ENCODE measurements at regions of chrX and their contacts with region 1.

Region 1: DNA sequence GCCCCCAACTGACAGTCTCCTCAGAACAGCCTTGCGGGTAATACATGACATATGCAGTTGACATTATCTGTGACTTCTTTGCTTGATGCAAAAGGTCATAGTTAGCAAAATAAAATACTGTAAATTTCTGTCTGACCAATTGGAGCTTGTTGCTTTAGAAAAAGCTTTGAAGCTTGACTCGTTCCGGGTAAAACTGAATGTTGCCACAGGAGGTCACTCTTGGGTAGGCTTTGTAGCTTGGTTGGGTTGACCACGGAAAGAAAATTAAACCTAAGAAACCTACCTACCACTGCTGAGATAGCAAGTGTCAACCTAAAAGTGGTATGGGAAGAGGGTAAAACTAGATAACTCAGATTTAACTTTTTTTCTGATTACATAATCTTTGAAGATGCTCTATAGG is 23.2 kb downstream of the PRPS2 start:
- DNase-seq: peak; percentile 44 to 51
- H3K4me3 ChIP-seq: no peak overlapping the region
- H3K27ac ChIP-seq: no peak overlapping the region
- H3K4me1 ChIP-seq: no peaks in the 10 kb centered on the region
- H3K27me3 ChIP-seq: no peaks in the 10 kb centered on the region
- CTCF ChIP-seq: peak; percentile 75

Region 2: DNA sequence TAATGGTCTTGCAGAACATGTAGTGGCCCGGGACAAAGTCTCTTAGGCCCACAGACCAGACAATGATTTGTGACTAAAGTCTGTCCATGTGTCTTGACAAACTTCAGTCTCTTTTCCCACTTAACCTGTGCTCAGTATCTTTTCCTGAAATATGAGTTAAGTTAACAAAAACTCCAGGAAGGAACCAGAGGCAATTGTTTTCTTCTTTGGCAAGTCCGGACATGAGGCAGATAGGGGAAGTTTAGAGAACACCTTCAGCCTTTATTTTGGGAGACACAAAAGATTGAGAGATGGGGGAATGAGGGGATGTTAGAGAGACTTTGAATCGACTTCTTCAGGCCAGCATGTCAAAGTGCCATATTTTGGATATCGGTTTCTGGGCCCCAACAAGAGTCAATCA is 756.3 kb before region 1 on chrX:
- CTCF ChIA-PET with region 1: no interaction called
- POLR2A ChIA-PET with region 1: no interaction called
- intact Hi-C with region 1: no loop called
- DNase-seq: no peak
- H3K4me3 ChIP-seq: no peak overlapping the region
- H3K27ac ChIP-seq: no peak overlapping the region
- H3K4me1 ChIP-seq: no peaks in the 10 kb centered on the region
- H3K27me3 ChIP-seq: no peaks in the 10 kb centered on the region
- CTCF ChIP-seq: no peak

Region 3: DNA sequence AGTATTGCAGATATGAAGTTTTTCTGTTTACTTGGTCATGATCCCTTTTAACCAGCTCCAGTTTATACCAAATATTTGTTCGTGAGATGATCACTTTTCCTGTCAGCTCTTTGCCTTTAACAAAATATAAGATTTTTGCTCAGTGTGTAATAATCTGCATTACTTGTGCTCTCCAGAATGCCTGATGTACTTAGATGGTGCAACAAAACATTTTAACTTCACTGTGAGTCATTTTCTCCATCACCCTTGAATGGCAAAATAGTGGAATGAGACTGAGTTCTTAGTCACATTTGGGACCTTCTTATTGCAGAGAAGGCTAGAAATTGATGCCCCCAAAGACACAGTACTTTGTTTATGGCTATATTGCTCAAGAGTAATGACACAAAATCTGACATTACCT is 424.1 kb before region 1 on chrX:
- CTCF ChIA-PET with region 1: no interaction called
- POLR2A ChIA-PET with region 1: no interaction called
- intact Hi-C with region 1: no loop called
- DNase-seq: no peak
- H3K4me3 ChIP-seq: no peak overlapping the region
- H3K27ac ChIP-seq: no peak overlapping the region
- H3K4me1 ChIP-seq: no peaks in the 10 kb centered on the region
- H3K27me3 ChIP-seq: 0 out of 2 replicates have a peak, but pooled peaks cover 3% of the 10 kb centered on the region
- CTCF ChIP-seq: no peak

Region 4: GRCh38 chrX:12721042-12721441 is 93.4 kb before region 1 on chrX:
- CTCF ChIA-PET with region 1: no interaction called
- POLR2A ChIA-PET with region 1: no interaction called
- intact Hi-C with region 1: no loop called
- DNase-seq: peak in 1 of 2 experiments; percentile 7
- H3K4me3 ChIP-seq: no peak overlapping the region
- H3K27ac ChIP-seq: no peak overlapping the region
- H3K4me1 ChIP-seq: no peaks in the 10 kb centered on the region
- H3K27me3 ChIP-seq: peaks cover 34% of the 10 kb centered on the region
- CTCF ChIP-seq: no peak

Region 5: GRCh38 chrX:12901486-12901885 is 87.1 kb after region 1 on chrX:
- CTCF ChIA-PET with region 1: no interaction called
- POLR2A ChIA-PET with region 1: no interaction called
- intact Hi-C with region 1: loop called (anchors 1 kb)
- DNase-seq: peak; percentile 52 to 57
- H3K4me3 ChIP-seq: no peak overlapping the region
- H3K27ac ChIP-seq: no peak overlapping the region
- H3K4me1 ChIP-seq: no peaks in the 10 kb centered on the region
- H3K27me3 ChIP-seq: no peaks in the 10 kb centered on the region
- CTCF ChIP-seq: peak; percentile 73

Region 6: DNA sequence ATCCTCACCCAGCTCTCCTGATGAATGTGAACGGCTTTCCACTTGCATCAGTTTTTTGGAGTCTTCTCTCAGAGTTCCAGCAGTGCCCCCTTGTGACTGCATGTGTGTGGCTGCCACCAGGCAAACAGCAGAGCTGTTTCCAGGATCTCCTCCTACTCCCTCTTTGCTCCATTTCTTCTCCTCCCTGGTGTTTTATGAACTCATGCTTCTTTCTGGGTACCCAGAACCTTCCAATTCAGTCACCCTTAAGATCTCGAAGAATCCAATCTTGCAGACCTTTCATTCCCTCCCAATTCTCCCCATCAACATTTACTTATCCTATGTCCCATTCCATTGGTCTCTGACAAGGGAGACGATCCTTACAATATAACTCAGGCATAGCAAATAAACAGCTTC is 831.7 kb after region 1 on chrX:
- CTCF ChIA-PET with region 1: no interaction called
- POLR2A ChIA-PET with region 1: no interaction called
- intact Hi-C with region 1: loop called (anchors 2 kb)
- DNase-seq: peak in 1 of 2 experiments; percentile 23
- H3K4me3 ChIP-seq: no peak overlapping the region
- H3K27ac ChIP-seq: no peak overlapping the region
- H3K4me1 ChIP-seq: no peaks in the 10 kb centered on the region; the same call in 1 of the 2 replicates
- H3K27me3 ChIP-seq: no peaks in the 10 kb centered on the region
- CTCF ChIP-seq: peak; percentile 65

Region 7: DNA sequence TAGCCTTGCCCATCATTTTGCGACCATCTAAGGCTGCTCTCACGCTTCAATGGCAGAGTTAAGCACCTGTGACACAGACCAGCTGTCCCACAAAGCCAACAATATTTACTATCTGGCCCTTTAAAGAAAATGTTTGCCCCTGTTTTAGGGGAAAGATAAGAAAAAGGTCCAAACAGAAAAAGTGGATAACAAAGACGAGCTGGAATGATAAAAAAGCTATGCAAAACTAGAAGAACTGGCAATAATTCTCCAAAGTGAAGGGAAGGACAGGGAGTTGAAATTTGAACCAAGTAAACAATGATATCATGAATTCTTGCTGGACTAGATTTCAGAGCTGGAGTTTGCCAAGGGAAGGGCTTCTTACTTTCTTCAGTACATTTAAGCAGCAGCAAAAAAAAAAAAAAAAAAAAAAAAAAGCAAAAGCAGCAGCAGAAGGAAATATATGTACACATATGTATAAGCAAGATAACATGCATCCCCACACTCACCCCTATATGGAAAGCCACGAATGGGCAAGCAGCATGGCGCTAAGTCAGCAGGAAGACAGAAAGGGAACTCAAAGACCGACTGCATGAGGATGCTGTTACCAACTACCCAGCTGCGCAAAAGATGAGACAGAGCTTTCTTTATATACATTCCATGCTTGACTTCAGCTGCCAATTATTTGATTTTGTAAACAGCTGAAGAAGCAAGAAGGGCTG is 907.5 kb after region 1 on chrX:
- CTCF ChIA-PET with region 1: interaction called, 13 read pairs
- POLR2A ChIA-PET with region 1: no interaction called
- intact Hi-C with region 1: no loop called
- DNase-seq: peak; percentile 11 to 85
- H3K4me3 ChIP-seq: no peak overlapping the region
- H3K27ac ChIP-seq: peak overlapping the region; percentile 46; the same call in 1 of the 2 replicates
- H3K4me1 ChIP-seq: peaks cover 15% of the 10 kb centered on the region
- H3K27me3 ChIP-seq: no peaks in the 10 kb centered on the region
- CTCF ChIP-seq: no peak